Activated CD4-positive, alpha-beta memory T cell treated with anti-CD3 and anti-CD28 coated beads, Interleukin-2, amount 10 ng/mL, durations not matched to agents 7 days and 5 days (primary cell): ENCODE measurements at regions of chr5 and their contacts with region 1.

Region 1: GRCh38 chr5:138128334-138128733 is 10.9 kb downstream of the NME5 start:
- DNase-seq: no peak
- H3K4me3 Mint-ChIP-seq: no peak overlapping the region
- H3K27ac Mint-ChIP-seq: no peak overlapping the region
- H3K4me1 Mint-ChIP-seq: peaks cover 2% of the 10 kb centered on the region
- H3K27me3 Mint-ChIP-seq: peaks cover 24% of the 10 kb centered on the region

Region 2: GRCh38 chr5:137778772-137779564 is 349.4 kb before region 1 on chr5:
- CTCF ChIA-PET with region 1: interaction called, 29 read pairs
- POLR2A ChIA-PET with region 1: no interaction called
- DNase-seq: no peak
- H3K4me3 Mint-ChIP-seq: no peak overlapping the region
- H3K27ac Mint-ChIP-seq: no peak overlapping the region
- H3K4me1 Mint-ChIP-seq: no peaks in the 10 kb centered on the region
- H3K27me3 Mint-ChIP-seq: peaks cover 13% of the 10 kb centered on the region

Region 3: DNA sequence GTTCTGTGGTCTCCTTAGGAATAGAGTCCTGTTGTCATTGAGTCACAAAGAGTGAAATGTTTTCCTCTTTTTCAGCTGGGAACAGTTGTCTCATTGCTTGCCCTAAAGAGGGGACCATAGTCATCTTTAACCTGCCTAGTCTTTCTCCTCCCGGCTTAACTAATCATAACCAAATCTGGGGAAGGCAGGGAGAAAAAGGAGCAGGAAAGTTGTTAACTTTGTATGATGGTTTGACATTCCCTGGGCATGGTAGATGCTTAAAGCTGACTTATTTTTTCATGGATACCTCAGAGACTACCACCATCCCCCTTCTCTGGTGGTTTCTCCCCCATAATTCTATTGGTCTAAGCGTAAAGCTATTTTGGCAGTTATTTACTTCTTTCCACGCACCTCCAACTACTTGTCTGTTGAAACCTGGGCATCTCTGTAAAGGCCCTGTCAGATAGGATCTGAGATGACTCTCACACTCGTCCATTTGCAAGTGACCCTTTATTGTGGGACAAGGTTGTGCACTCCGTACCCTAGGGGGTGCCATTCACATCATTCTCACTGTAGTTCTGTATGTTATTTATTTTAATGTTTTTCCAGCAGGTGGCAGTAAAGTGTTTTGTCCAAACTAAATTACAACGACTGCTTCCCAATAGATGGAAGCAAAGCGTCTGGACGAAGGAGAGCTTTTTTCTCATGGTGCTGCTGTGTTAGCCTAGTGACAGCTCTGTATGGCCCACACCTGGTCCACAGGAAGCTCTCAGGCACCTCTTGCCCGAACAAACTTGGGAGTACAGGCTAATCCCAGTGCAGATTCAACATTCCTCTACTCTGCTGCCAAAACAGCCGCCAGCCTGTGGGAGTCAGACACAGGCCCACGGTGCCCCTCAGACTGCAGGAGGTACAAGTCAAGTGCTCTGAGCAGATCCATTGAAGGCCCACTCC is 92.5 kb before region 1 on chr5:
- CTCF ChIA-PET with region 1: interaction called, 25 read pairs
- POLR2A ChIA-PET with region 1: no interaction called
- DNase-seq: peak; percentile 68
- H3K4me3 Mint-ChIP-seq: no peak overlapping the region
- H3K27ac Mint-ChIP-seq: no peak overlapping the region
- H3K4me1 Mint-ChIP-seq: peaks cover 38% of the 10 kb centered on the region
- H3K27me3 Mint-ChIP-seq: no peaks in the 10 kb centered on the region

Region 4: GRCh38 chr5:138065102-138065501 is 63.2 kb before region 1 on chr5:
- CTCF ChIA-PET with region 1: interaction called, 11 read pairs
- POLR2A ChIA-PET with region 1: interaction called, 3 read pairs
- DNase-seq: no peak
- H3K4me3 Mint-ChIP-seq: no peak overlapping the region
- H3K27ac Mint-ChIP-seq: no peak overlapping the region
- H3K4me1 Mint-ChIP-seq: peaks cover 14% of the 10 kb centered on the region
- H3K27me3 Mint-ChIP-seq: no peaks in the 10 kb centered on the region

Region 5: DNA sequence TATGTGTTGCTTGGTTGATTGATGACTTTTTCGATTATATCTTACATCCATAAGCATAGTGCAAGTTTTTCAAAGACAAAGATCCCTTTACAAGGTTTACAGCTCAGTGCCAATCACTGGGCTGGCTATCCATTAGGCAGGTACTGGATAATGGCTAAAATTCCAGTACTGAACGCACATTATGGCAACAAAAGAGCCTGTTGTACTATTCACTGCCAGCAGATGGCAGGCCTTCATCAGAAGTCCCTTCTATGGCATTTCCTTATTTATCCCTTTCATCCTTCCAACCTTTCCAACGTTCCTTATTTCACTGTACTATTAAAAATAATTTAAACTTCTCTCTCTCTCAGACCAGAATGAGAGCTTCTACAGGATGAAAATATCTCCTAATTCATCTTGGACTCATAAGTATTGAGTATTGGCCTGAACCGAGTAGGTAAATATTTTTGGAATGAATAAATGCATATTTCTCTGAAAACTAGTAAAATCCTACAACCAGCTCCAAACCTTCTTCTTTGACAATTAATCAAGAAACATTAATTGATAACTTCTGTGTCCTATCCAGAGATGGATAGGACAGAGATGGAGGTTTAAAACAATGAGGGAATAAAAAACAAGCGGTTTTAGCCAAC is 51.2 kb before region 1 on chr5:
- CTCF ChIA-PET with region 1: interaction called, 88 read pairs
- POLR2A ChIA-PET with region 1: interaction called, 5 read pairs
- DNase-seq: peak; percentile 57
- H3K4me3 Mint-ChIP-seq: no peak overlapping the region
- H3K27ac Mint-ChIP-seq: no peak overlapping the region
- H3K4me1 Mint-ChIP-seq: peaks cover 17% of the 10 kb centered on the region
- H3K27me3 Mint-ChIP-seq: peaks cover 6% of the 10 kb centered on the region

Region 6: GRCh38 chr5:138138949-138139780 is 10.8 kb after region 1 on chr5 and contains the start of gene NME5:
- CTCF ChIA-PET with region 1: interaction called, 13 read pairs
- POLR2A ChIA-PET with region 1: no interaction called
- DNase-seq: no peak
- H3K4me3 Mint-ChIP-seq: no peak within 1 kb of the TSS
- H3K27ac Mint-ChIP-seq: no peak within 1 kb of the TSS
- H3K4me1 Mint-ChIP-seq: no peaks in the 10 kb centered on the region
- H3K27me3 Mint-ChIP-seq: peaks cover 10% of the 10 kb centered on the region
- total RNA-seq, gene NME5: not detected